ENCODE measurements at regions of chr15 and their contacts with region 1.

Region 1: GRCh38 chr15:34064438-34064837 is 25.4 kb upstream of the AVEN start:
- H3K4me3 Mint-ChIP-seq: no peak overlapping the region
- H3K27ac Mint-ChIP-seq: no peak overlapping the region
- H3K4me1 Mint-ChIP-seq: peaks cover 5% of the 10 kb centered on the region
- H3K27me3 Mint-ChIP-seq: no peaks in the 10 kb centered on the region

Region 2: GRCh38 chr15:34587717-34588674 is 523.6 kb after region 1 on chr15:
- intact Hi-C with region 1: loop called (anchors 5 kb)
- H3K4me3 Mint-ChIP-seq: peak overlapping the region; percentile 51
- H3K27ac Mint-ChIP-seq: no peak overlapping the region
- H3K4me1 Mint-ChIP-seq: peaks cover 9% of the 10 kb centered on the region
- H3K27me3 Mint-ChIP-seq: peaks cover 29% of the 10 kb centered on the region

Measured in dendritic cell treated with granulocyte-macrophage colony-stimulating factor and Interleukin-4, amounts not matched to agents 40 ng/mL and 50 ng/mL, for 4 days (primary cell).